ENCODE measurements at regions of chr1 and their contacts with region 1.

Region 1: DNA sequence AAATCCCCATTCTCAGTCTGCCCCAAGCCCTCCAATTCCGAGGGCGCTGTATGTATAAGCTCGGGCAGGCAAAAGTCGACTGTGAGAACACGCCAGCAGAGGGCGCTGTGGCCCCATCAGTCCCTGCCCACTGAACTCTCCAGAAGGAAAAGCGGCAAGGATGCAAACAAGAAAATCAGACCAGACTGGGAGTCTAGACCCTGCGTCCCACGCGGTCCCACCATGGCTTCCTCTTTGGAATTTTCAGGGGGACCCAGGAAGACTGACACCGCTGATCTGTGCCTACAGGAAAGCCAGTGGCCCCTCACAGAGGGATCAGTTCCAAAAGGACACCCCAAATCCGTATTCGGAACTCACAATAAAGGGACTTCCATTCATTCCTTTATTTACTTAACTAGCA is 19.5 kb downstream of the TEX35 start:
- DNase-seq: peak; percentile 90
- H3K4me3 ChIP-seq: no peak overlapping the region
- H3K27ac ChIP-seq: no peak overlapping the region
- H3K4me1 ChIP-seq: peaks cover 1 to 21% (median 6%) of the 10 kb centered on the region in 4 donors
- H3K27me3 ChIP-seq: no peaks in the 10 kb centered on the region
- CTCF ChIP-seq: peak; percentile 90 to 93 (median 92)
- EP300 ChIP-seq: no peak
- POLR2A ChIP-seq: no peak

Region 2: DNA sequence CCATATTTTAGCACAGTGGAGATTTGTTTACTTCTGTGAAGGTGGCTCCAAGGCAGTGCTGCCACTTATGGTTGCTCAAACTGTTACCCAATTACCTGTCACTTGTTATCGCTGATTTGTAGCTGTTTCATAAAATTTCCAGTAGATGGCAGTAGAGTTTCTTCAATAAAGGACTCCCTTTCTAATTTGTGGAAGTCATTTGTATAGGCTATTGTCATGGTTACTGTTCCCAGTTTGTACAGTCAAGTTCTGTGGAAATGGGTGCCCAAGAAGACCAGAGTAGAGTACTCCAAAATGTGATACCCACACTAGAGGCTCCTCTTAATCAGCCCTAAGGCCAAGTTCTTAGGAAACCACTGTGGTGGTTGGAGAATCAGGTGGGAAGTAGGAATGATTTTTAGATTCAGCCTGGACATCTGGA is 221.7 kb before region 1 on chr1:
- in situ Hi-C with region 1: no loop called
- intact Hi-C with region 1: loop called (anchors 10 kb)
- DNase-seq: no peak
- H3K4me3 ChIP-seq: no peak overlapping the region
- H3K27ac ChIP-seq: no peak overlapping the region
- H3K4me1 ChIP-seq: peaks cover 0 to 12% (median 8%) of the 10 kb centered on the region in 4 donors
- H3K27me3 ChIP-seq: no peaks in the 10 kb centered on the region
- CTCF ChIP-seq: peak; percentile 66 to 81 (median 74)
- EP300 ChIP-seq: no peak
- POLR2A ChIP-seq: no peak

Region 3: DNA sequence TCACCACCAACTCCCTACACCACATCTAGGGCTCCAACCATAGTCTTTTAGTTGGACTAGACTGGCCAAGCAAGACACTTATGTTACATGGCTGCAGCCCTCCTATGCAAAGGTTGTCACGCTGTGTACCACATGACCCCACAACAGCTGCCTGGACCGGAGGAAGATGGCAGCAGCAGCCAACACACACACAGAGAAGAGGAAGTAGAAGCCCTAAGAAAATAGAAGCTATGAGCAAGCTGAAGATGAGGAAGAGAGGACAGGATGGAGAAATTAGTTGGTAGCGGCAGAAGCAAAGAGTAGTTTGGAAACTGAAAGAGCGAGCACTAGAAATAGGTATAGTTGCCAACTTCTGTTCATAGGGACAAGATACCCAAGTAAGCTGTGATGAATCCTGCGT is 131.9 kb after region 1 on chr1:
- in situ Hi-C with region 1: no loop called
- intact Hi-C with region 1: no loop called
- DNase-seq: peak; percentile 14
- H3K4me3 ChIP-seq: no peak overlapping the region
- H3K27ac ChIP-seq: no peak overlapping the region
- H3K4me1 ChIP-seq: no peaks in the 10 kb centered on the region
- H3K27me3 ChIP-seq: no peaks in the 10 kb centered on the region
- CTCF ChIP-seq: no peak
- EP300 ChIP-seq: no peak
- POLR2A ChIP-seq: no peak

Region 4: DNA sequence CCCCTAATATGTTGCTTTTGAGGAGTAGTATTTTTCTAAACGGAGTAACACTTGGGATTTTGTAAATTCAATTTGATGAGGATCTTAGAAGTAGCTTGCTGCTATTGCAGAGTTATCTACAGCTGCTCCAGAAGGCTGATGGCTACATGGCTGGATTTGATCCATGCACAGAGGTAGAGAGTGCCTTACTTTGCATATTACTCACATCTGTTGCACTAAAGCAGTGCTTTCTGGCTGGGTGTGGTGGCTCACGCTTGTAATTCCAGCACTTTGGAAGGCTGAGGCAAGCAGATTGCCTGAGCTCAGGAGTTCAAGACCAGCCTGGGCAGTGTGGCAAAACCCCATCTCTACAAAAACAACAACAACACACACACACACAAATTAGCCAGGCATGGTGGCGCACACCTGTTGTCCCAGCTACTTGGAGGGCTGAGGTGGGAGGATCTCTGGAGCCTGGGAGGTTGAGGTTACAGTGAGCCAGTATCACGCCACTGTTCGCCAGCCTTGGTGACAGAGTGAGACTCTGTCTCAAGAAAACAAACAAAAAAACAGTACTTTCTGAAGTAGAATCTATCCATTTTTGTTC is 217.3 kb after region 1 on chr1:
- in situ Hi-C with region 1: loop called in 2 of 4 experiments (anchors 10 kb)
- intact Hi-C with region 1: no loop called
- DNase-seq: no peak
- H3K4me3 ChIP-seq: no peak overlapping the region
- H3K27ac ChIP-seq: no peak overlapping the region
- H3K4me1 ChIP-seq: peaks cover 0 to 8% (median 2%) of the 10 kb centered on the region in 4 donors
- H3K27me3 ChIP-seq: no peaks in the 10 kb centered on the region
- CTCF ChIP-seq: no peak
- EP300 ChIP-seq: no peak
- POLR2A ChIP-seq: no peak

Region 5: GRCh38 chr1:178997428-178997827 is 465.0 kb after region 1 on chr1:
- in situ Hi-C with region 1: loop called in 3 of 4 experiments (anchors 5 to 25 kb)
- intact Hi-C with region 1: loop called (anchors 10 kb)
- DNase-seq: no peak
- H3K4me3 ChIP-seq: no peak overlapping the region
- H3K27ac ChIP-seq: no peak overlapping the region
- H3K4me1 ChIP-seq: peaks cover 0 to 3% (median 3%) of the 10 kb centered on the region in 4 donors
- H3K27me3 ChIP-seq: no peaks in the 10 kb centered on the region
- CTCF ChIP-seq: no peak
- EP300 ChIP-seq: no peak
- POLR2A ChIP-seq: no peak